ENCODE measurements at regions of chr11 and their contacts with region 1.

Region 1: DNA sequence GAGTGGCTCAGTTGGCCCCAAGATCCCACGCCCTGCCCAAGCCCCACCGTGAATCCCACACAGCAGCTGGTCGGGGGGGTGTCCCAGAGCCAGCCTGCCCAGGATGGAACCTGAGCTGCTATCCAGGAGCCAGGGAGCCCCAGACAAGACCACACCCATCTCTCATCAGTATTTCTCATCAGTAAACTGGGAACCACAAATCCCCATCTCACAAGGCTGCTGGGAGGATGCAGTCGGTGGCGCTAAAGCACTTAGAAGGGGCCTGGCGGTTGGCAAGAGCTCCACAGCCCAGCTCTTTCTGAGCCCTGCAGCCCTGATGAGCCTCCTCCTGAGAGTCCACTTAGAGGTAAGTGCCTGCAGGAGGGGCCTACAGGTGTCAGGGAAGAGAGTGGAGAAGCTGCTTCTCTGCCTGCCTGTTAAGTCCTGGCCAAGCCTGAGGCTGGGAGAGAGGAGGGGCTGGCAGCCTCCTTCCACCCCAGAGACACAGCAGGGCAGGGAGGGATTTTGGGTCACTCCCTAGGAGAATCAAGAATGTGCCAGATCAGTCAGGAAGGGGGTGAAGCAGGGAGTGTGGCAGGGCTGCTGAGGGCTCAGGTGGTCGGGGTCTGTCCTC is 6.1 kb downstream of the FADS3 start:
- DNase-seq: no peak
- ATAC-seq: no peak
- H3K4me3 ChIP-seq: no peak overlapping the region
- H3K4me3 Mint-ChIP-seq: no peak overlapping the region
- H3K27ac ChIP-seq: no peak overlapping the region
- H3K27ac Mint-ChIP-seq: no peak overlapping the region
- H3K4me1 ChIP-seq: peaks cover 21 to 48% of the 10 kb centered on the region in 2 donors
- H3K4me1 Mint-ChIP-seq: peaks cover 49% of the 10 kb centered on the region
- H3K27me3 ChIP-seq: no peaks in the 10 kb centered on the region
- H3K27me3 Mint-ChIP-seq: no peaks in the 10 kb centered on the region
- CTCF ChIP-seq: no peak

Region 2: DNA sequence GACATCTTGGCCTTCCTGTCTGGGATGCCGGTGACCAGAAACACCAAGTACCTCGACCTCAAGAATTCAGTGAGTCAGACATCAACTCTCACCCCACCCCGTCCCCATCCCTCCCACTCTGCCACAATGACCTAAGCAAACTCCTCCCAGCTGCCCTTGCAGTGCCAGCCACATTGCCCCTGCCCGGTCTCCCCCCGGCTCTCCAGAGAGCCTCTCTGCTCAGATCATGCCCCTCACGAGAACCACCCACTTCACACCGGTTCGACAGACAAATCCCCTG is 156.4 kb before region 1 on chr11:
- CTCF ChIA-PET with region 1: no interaction called
- POLR2A ChIA-PET with region 1: no interaction called
- intact Hi-C with region 1: no loop called
- DNase-seq: no peak
- ATAC-seq: no peak
- H3K4me3 ChIP-seq: no peak overlapping the region
- H3K4me3 Mint-ChIP-seq: no peak overlapping the region
- H3K27ac ChIP-seq: no peak overlapping the region
- H3K27ac Mint-ChIP-seq: no peak overlapping the region
- H3K4me1 ChIP-seq: peaks cover 0 to 8% of the 10 kb centered on the region in 2 donors
- H3K4me1 Mint-ChIP-seq: peaks cover 2% of the 10 kb centered on the region
- H3K27me3 ChIP-seq: no peaks in the 10 kb centered on the region
- H3K27me3 Mint-ChIP-seq: peaks cover 4% of the 10 kb centered on the region
- CTCF ChIP-seq: no peak

Region 3: GRCh38 chr11:61776551-61777075 is 108.7 kb before region 1 on chr11:
- CTCF ChIA-PET with region 1: no interaction called
- POLR2A ChIA-PET with region 1: no interaction called
- intact Hi-C with region 1: no loop called
- DNase-seq: peak; percentile 56
- ATAC-seq: peak; percentile 42
- H3K4me3 ChIP-seq: no peak overlapping the region
- H3K4me3 Mint-ChIP-seq: peak overlapping the region; percentile 73
- H3K27ac ChIP-seq: no peak overlapping the region
- H3K27ac Mint-ChIP-seq: no peak overlapping the region
- H3K4me1 ChIP-seq: peaks cover 13 to 15% of the 10 kb centered on the region in 2 donors
- H3K4me1 Mint-ChIP-seq: peaks cover 17% of the 10 kb centered on the region
- H3K27me3 ChIP-seq: peaks cover 0 to 8% (median 0%) of the 10 kb centered on the region in 4 experiments
- H3K27me3 Mint-ChIP-seq: peaks cover 12% of the 10 kb centered on the region
- CTCF ChIP-seq: peak; percentile 71

Region 4: GRCh38 chr11:61871158-61871597 is 14.1 kb before region 1 on chr11:
- CTCF ChIA-PET with region 1: interaction called, 33 read pairs
- POLR2A ChIA-PET with region 1: no interaction called
- intact Hi-C with region 1: no loop called
- DNase-seq: peak; percentile 88
- ATAC-seq: peak; percentile 97
- H3K4me3 ChIP-seq: peak overlapping the region in 4 of 5 experiments; percentile 13 to 38 (median 26)
- H3K4me3 Mint-ChIP-seq: peak overlapping the region; percentile 84
- H3K27ac ChIP-seq: no peak overlapping the region
- H3K27ac Mint-ChIP-seq: peak overlapping the region; percentile 83
- H3K4me1 ChIP-seq: peaks cover 9 to 12% of the 10 kb centered on the region in 2 donors
- H3K4me1 Mint-ChIP-seq: peaks cover 8% of the 10 kb centered on the region
- H3K27me3 ChIP-seq: peaks cover 0 to 4% (median 0%) of the 10 kb centered on the region in 4 experiments
- H3K27me3 Mint-ChIP-seq: no peaks in the 10 kb centered on the region
- CTCF ChIP-seq: peak; percentile 98